Activated naive CD4-positive, alpha-beta T cell treated with anti-CD3 and anti-CD28 coated beads, Interleukin-2, amount 10 ng/mL, durations not matched to agents 7 days and 5 days (primary cell): ENCODE measurements at regions of chr11 and their contacts with region 1.

Region 1: DNA sequence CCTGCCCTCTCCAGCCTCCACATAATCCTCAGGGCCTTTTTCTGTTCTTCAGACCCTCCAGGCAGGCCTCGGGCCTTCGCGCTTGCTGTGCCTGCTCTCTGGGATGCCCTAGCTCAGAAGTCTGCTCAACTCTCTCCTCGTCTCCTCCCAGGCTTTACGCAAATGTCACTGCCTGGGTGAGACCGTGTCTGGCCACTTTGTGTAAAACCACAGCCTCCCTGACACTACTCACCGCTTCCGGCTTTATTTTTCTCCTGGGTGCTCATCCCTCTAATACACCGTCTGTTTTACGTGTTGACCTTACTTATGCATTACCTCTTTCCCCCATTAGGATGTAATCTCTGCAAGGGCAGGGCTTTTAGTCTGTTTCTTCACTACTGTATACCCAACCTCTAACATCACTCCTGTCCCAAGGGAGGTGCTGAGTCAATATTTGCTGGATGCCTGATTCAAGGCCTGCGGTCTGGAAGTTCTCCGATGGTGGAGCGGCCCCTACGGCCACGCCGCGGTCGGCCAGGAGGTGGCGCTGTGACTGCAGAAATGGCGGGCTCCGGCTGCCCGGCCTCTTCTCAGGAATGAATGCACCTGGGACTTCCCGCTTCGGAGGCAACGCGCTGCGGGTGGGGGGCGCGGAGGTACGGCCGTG is 58.2 kb upstream of the THY1 start:
- DNase-seq: peak; percentile 77
- H3K4me3 Mint-ChIP-seq: no peak overlapping the region
- H3K27ac Mint-ChIP-seq: no peak overlapping the region
- H3K4me1 Mint-ChIP-seq: no peaks in the 10 kb centered on the region
- H3K27me3 Mint-ChIP-seq: peaks cover 32% of the 10 kb centered on the region

Region 2: GRCh38 chr11:119210050-119210449 is 271.1 kb before region 1 on chr11:
- CTCF ChIA-PET with region 1: no interaction called
- DNase-seq: no peak
- H3K4me3 Mint-ChIP-seq: no peak overlapping the region
- H3K27ac Mint-ChIP-seq: no peak overlapping the region
- H3K4me1 Mint-ChIP-seq: peaks cover 29% of the 10 kb centered on the region
- H3K27me3 Mint-ChIP-seq: no peaks in the 10 kb centered on the region

Region 3: DNA sequence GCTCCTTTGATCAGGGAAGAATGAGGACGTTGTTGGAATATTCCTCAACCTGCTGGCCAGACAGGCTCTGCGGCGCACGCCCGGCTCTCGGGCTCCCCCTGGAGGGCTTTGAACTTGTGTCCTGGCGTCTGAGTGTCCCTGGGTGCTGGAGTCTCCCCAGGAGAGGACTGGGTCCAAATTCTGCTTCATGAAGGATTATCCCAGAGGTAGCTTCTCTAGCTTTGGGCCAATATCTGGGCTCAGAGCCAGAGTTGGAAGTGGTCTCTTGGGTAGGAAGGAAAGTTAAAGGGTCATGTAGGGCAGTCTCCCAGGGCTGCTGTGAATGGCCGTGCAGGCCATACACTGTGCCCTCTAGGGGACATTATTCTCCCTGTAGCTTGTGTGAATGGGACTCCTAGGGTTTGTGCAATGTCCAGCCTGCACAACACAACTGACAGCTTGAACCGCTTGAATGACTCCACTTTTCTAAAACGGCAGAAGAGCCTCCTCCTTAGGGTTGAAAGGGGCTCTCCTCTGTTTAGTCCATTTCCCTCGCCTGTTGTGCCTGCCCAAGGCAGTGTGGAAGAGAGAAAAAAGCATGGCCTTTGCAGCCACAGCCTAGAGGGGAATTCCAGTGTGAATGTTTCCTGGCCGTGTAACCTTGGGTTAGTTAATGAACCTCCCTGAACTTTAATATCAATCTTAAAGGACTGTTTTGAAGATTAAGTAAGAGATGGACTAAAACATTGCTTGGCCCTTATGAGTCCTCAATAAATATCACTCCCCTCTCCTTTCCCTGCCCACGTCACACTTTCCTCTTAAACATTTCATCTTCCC is 53.0 kb after region 1 on chr11:
- CTCF ChIA-PET with region 1: interaction called, 10 read pairs
- DNase-seq: peak; percentile 64
- H3K4me3 Mint-ChIP-seq: no peak overlapping the region
- H3K27ac Mint-ChIP-seq: no peak overlapping the region
- H3K4me1 Mint-ChIP-seq: no peaks in the 10 kb centered on the region
- H3K27me3 Mint-ChIP-seq: peaks cover 29% of the 10 kb centered on the region

Region 4: GRCh38 chr11:119567688-119568582 is 86.8 kb after region 1 on chr11:
- CTCF ChIA-PET with region 1: no interaction called
- DNase-seq: no peak
- H3K4me3 Mint-ChIP-seq: no peak overlapping the region
- H3K27ac Mint-ChIP-seq: no peak overlapping the region
- H3K4me1 Mint-ChIP-seq: no peaks in the 10 kb centered on the region
- H3K27me3 Mint-ChIP-seq: peaks cover 12% of the 10 kb centered on the region

Region 5: GRCh38 chr11:120108154-120108865 is 627.2 kb after region 1 on chr11:
- CTCF ChIA-PET with region 1: interaction called, 10 read pairs
- DNase-seq: peak; percentile 72
- H3K4me3 Mint-ChIP-seq: no peak overlapping the region
- H3K27ac Mint-ChIP-seq: no peak overlapping the region
- H3K4me1 Mint-ChIP-seq: no peaks in the 10 kb centered on the region
- H3K27me3 Mint-ChIP-seq: peaks cover 26% of the 10 kb centered on the region